CD4-positive, alpha-beta T cell (primary cell): ENCODE measurements at regions of chr19 and their contacts with region 1.

Region 1: DNA sequence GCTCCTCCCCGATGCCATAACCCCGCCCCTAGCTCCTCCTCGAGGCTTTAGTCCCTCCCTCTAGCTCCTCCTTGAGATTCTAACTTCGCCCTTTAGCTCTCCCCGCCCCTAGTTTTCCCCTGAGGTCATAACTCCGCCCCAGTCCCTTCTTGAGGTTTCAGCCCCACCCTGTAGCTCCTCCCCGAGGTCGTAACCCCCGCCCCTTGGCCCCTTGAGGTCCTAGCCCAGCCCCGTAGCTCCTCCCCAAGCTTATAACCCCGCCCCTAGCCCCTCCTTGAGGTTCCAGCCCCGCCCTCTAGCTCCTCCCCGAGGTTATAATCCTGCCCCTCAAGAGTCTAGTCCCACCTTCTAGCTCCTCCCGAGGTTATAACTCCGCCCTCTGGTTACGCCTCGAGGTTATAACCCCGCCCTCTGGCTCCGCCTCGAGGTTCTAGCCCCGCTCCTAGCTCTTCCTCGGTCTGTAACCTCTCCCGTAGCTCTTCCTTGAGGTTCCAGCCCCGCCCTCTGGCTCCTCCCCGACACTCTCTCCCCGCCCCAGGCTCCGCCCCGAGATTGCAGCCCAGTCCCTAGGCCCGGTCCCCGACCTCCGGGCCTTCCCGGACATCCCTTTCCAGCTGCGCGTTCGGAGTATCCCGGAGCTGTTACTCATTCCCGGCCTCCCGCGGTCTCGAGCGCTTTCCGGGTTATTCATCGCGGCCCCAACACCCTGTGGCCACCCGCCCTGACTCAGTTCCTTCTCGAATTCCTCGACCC is 1.4 kb downstream of the PLAUR start:
- DNase-seq: peak; percentile 87 to 99 (median 96)
- ATAC-seq: peak; percentile 80
- H3K4me3 ChIP-seq: peak overlapping the region; percentile 68
- H3K4me3 Mint-ChIP-seq: peak overlapping the region; percentile 87
- H3K27ac ChIP-seq: peak overlapping the region in 1 of 2 donors; percentile 37
- H3K27ac Mint-ChIP-seq: peak overlapping the region; percentile 61
- H3K4me1 ChIP-seq: peaks cover 54% of the 10 kb centered on the region
- H3K4me1 Mint-ChIP-seq: peaks cover 52% of the 10 kb centered on the region
- H3K27me3 ChIP-seq: no peaks in the 10 kb centered on the region
- H3K27me3 Mint-ChIP-seq: no peaks in the 10 kb centered on the region
- CTCF ChIP-seq: no peak

Region 2: GRCh38 chr19:42283143-42284065 is 1385.2 kb before region 1 on chr19:
- CTCF ChIA-PET with region 1: no interaction called
- POLR2A ChIA-PET with region 1: no interaction called
- intact Hi-C with region 1: no loop called
- DNase-seq: peak; percentile 92 to 99 (median 97)
- ATAC-seq: peak; percentile 62
- H3K4me3 ChIP-seq: peak overlapping the region; percentile 55
- H3K4me3 Mint-ChIP-seq: no peak overlapping the region
- H3K27ac ChIP-seq: peak overlapping the region; percentile 86 to 88
- H3K27ac Mint-ChIP-seq: no peak overlapping the region
- H3K4me1 ChIP-seq: peaks cover 71% of the 10 kb centered on the region
- H3K4me1 Mint-ChIP-seq: peaks cover 43% of the 10 kb centered on the region
- H3K27me3 ChIP-seq: no peaks in the 10 kb centered on the region
- H3K27me3 Mint-ChIP-seq: no peaks in the 10 kb centered on the region
- CTCF ChIP-seq: no peak

Region 3: DNA sequence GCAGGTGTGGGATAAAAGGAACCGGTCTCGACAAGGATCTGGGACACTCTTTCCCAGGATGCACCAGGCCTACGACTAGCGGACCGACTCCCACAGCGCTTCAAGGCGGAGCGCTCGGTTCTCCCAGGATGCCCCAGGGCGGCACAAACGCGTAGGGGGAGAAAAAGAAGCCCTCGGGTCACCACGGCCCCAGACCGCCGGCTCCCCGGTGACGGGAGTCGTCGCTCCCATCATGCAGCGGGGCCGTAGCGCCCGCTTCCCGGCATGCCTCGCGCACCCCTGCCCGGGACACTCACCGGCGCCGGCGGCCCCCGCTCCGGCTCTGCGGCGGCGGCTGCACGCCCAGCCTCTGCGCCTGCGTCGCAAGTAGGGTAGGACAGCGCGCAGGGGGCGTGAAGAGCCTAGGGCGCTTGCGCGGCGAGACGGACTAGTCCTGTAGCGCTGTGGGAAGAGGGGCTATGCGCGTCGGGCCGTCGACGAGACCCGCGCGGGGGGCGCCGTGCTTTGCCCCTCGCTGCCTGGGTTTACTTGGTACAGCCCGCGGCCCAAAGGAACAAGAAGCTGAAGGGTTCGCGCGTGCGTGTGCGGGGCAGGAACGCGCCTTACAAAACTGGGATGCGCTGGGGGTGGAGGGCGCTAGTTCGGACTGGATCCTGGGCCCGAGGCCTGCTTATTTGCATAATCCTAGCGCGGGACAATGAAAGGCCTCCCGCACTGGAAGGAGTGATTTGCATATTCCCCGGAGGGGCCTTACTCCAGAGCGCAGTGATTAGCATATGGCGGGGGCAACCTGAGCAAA is 49.1 kb before region 1 on chr19 and contains the start of gene ZNF428:
- CTCF ChIA-PET with region 1: interaction called, 3 read pairs
- POLR2A ChIA-PET with region 1: interaction called, 8 read pairs
- intact Hi-C with region 1: loop called in 1 of 2 experiments (anchors 10 kb)
- DNase-seq: peak; percentile 69 to 95 (median 82)
- ATAC-seq: peak; percentile 84
- H3K4me3 ChIP-seq: peak within 1 kb of the TSS; percentile 100
- H3K4me3 Mint-ChIP-seq: peak within 1 kb of the TSS; percentile 98
- H3K27ac ChIP-seq: peak within 1 kb of the TSS; percentile 91 to 92
- H3K27ac Mint-ChIP-seq: peak within 1 kb of the TSS; percentile 98
- H3K4me1 ChIP-seq: peaks cover 26% of the 10 kb centered on the region
- H3K4me1 Mint-ChIP-seq: peaks cover 55% of the 10 kb centered on the region
- H3K27me3 ChIP-seq: no peaks in the 10 kb centered on the region
- H3K27me3 Mint-ChIP-seq: no peaks in the 10 kb centered on the region
- CTCF ChIP-seq: no peak
- total RNA-seq, gene ZNF428: 22.3 to 24.8 TPM

Region 4: GRCh38 chr19:43639519-43640423 is 28.8 kb before region 1 on chr19 and contains the start of gene CADM4:
- CTCF ChIA-PET with region 1: no interaction called
- POLR2A ChIA-PET with region 1: interaction called, 4 read pairs
- intact Hi-C with region 1: loop called in 1 of 2 experiments (anchors 2 kb)
- DNase-seq: peak; percentile 23 to 84 (median 46)
- ATAC-seq: peak; percentile 86
- H3K4me3 ChIP-seq: peak within 1 kb of the TSS; percentile 57
- H3K4me3 Mint-ChIP-seq: peak within 1 kb of the TSS; percentile 85
- H3K27ac ChIP-seq: no peak within 1 kb of the TSS
- H3K27ac Mint-ChIP-seq: no peak within 1 kb of the TSS
- H3K4me1 ChIP-seq: peaks cover 18% of the 10 kb centered on the region
- H3K4me1 Mint-ChIP-seq: peaks cover 13% of the 10 kb centered on the region
- H3K27me3 ChIP-seq: peaks cover 6 to 26% of the 10 kb centered on the region in 2 experiments
- H3K27me3 Mint-ChIP-seq: peaks cover 33% of the 10 kb centered on the region
- CTCF ChIP-seq: no peak
- total RNA-seq, gene CADM4: 0.28 to 0.36 TPM

Region 5: GRCh38 chr19:43700395-43701000 is 31.9 kb after region 1 on chr19:
- CTCF ChIA-PET with region 1: interaction called, 4 read pairs
- POLR2A ChIA-PET with region 1: interaction called, 15 read pairs
- intact Hi-C with region 1: loop called in 1 of 2 experiments (anchors 1 kb)
- DNase-seq: peak in 5 of 14 experiments; percentile 1 to 50 (median 17)
- ATAC-seq: no peak
- H3K4me3 ChIP-seq: peak overlapping the region; percentile 55
- H3K4me3 Mint-ChIP-seq: peak overlapping the region; percentile 84
- H3K27ac ChIP-seq: peak overlapping the region; percentile 29 to 81
- H3K27ac Mint-ChIP-seq: peak overlapping the region; percentile 79
- H3K4me1 ChIP-seq: peaks cover 29% of the 10 kb centered on the region
- H3K4me1 Mint-ChIP-seq: peaks cover 19% of the 10 kb centered on the region
- H3K27me3 ChIP-seq: no peaks in the 10 kb centered on the region
- H3K27me3 Mint-ChIP-seq: peaks cover 16% of the 10 kb centered on the region
- CTCF ChIP-seq: no peak

Region 6: GRCh38 chr19:43754503-43755255 is 86.1 kb after region 1 on chr19 and contains the start of gene SMG9:
- CTCF ChIA-PET with region 1: interaction called, 3 read pairs
- POLR2A ChIA-PET with region 1: interaction called, 16 read pairs
- intact Hi-C with region 1: no loop called
- DNase-seq: peak; percentile 96 to 100 (median 98)
- ATAC-seq: peak; percentile 79
- H3K4me3 ChIP-seq: peak within 1 kb of the TSS; percentile 95
- H3K4me3 Mint-ChIP-seq: peak within 1 kb of the TSS; percentile 98
- H3K27ac ChIP-seq: peak within 1 kb of the TSS; percentile 97 to 99
- H3K27ac Mint-ChIP-seq: peak within 1 kb of the TSS; percentile 95
- H3K4me1 ChIP-seq: peaks cover 42% of the 10 kb centered on the region
- H3K4me1 Mint-ChIP-seq: peaks cover 43% of the 10 kb centered on the region
- H3K27me3 ChIP-seq: no peaks in the 10 kb centered on the region
- H3K27me3 Mint-ChIP-seq: no peaks in the 10 kb centered on the region
- CTCF ChIP-seq: no peak
- total RNA-seq, gene SMG9: 34.7 to 38.2 TPM